ENCODE measurements at regions of chr11 and their contacts with region 1.

Region 1: GRCh38 chr11:86802601-86803051 is 2.3 kb downstream of the PRSS23 start:
- DNase-seq: no peak
- H3K4me3 Mint-ChIP-seq: peak overlapping the region; percentile 92
- H3K27ac Mint-ChIP-seq: peak overlapping the region; percentile 69
- H3K4me1 Mint-ChIP-seq: peaks cover 77% of the 10 kb centered on the region
- H3K27me3 Mint-ChIP-seq: peaks cover 24% of the 10 kb centered on the region

Region 2: DNA sequence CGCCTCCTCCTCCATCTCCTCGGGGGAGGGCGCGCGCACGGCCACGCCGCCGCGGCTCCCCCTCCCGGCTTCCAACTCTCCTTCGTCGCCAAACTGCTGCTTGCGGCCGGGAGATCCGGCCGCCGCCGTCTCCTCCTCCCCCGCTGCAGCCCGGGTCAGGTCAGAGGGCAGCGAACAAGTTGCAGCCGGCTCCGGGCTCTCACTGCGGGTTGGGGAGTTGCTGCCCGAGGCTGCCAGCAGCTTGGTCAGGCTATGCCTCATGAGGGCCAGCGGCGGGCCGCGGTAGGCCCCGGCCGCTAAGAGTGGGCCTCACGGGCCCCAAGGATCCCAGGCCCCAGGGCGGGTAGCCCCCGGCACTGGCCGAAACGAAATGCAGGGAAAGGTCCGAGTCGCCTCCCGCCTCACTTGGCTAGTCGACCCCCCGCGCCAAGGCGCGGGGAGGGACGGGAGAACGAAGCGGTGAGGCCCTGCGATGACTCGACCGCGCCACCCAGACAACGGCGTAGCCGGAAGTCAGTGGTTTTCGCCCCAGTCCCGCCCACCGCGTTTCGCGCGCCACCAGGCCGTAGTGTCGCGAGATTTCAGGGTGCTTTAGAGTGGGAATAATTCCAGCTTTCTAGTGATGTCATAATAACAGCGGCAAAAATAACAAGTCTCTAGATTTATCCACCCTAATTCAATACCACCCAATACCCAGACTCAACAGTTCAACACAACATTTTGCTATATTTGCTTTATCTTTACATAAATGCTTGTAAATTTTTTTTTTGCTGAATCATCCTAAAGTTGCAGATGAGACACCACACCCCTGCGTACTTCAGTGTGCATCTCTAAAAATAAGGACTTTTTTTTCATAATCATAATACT is 1137.8 kb before region 1 on chr11 and contains the start of gene CREBZF:
- intact Hi-C with region 1: loop called (anchors 5 kb)
- DNase-seq: peak; percentile 94
- H3K4me3 Mint-ChIP-seq: peak within 1 kb of the TSS; percentile 99
- H3K27ac Mint-ChIP-seq: peak within 1 kb of the TSS; percentile 97
- H3K4me1 Mint-ChIP-seq: peaks cover 51% of the 10 kb centered on the region
- H3K27me3 Mint-ChIP-seq: no peaks in the 10 kb centered on the region
- total RNA-seq, gene CREBZF: 52.0 and 55.9 TPM in 2 replicates

Region 3: GRCh38 chr11:85947431-85948272 is 855.0 kb before region 1 on chr11:
- intact Hi-C with region 1: loop called (anchors 1 kb)
- DNase-seq: peak; percentile 6
- H3K4me3 Mint-ChIP-seq: peak overlapping the region; percentile 7
- H3K27ac Mint-ChIP-seq: peak overlapping the region; percentile 93
- H3K4me1 Mint-ChIP-seq: peaks cover 60% of the 10 kb centered on the region
- H3K27me3 Mint-ChIP-seq: no peaks in the 10 kb centered on the region

Region 4: GRCh38 chr11:86447763-86448480 is 354.7 kb before region 1 on chr11:
- intact Hi-C with region 1: loop called (anchors 1 kb)
- DNase-seq: peak; percentile 31
- H3K4me3 Mint-ChIP-seq: peak overlapping the region; percentile 48
- H3K27ac Mint-ChIP-seq: no peak overlapping the region
- H3K4me1 Mint-ChIP-seq: peaks cover 43% of the 10 kb centered on the region
- H3K27me3 Mint-ChIP-seq: no peaks in the 10 kb centered on the region

Region 5: GRCh38 chr11:86592659-86593451 is 209.8 kb before region 1 on chr11:
- intact Hi-C with region 1: loop called (anchors 1 kb)
- DNase-seq: peak; percentile 81
- H3K4me3 Mint-ChIP-seq: peak overlapping the region; percentile 63
- H3K27ac Mint-ChIP-seq: peak overlapping the region; percentile 93
- H3K4me1 Mint-ChIP-seq: peaks cover 61% of the 10 kb centered on the region
- H3K27me3 Mint-ChIP-seq: no peaks in the 10 kb centered on the region

Region 6: GRCh38 chr11:86688398-86689179 is 114.0 kb before region 1 on chr11:
- intact Hi-C with region 1: loop called (anchors 1 kb)
- DNase-seq: peak; percentile 12
- H3K4me3 Mint-ChIP-seq: peak overlapping the region; percentile 60
- H3K27ac Mint-ChIP-seq: peak overlapping the region; percentile 92
- H3K4me1 Mint-ChIP-seq: peaks cover 26% of the 10 kb centered on the region
- H3K27me3 Mint-ChIP-seq: peaks cover 8% of the 10 kb centered on the region

Region 7: DNA sequence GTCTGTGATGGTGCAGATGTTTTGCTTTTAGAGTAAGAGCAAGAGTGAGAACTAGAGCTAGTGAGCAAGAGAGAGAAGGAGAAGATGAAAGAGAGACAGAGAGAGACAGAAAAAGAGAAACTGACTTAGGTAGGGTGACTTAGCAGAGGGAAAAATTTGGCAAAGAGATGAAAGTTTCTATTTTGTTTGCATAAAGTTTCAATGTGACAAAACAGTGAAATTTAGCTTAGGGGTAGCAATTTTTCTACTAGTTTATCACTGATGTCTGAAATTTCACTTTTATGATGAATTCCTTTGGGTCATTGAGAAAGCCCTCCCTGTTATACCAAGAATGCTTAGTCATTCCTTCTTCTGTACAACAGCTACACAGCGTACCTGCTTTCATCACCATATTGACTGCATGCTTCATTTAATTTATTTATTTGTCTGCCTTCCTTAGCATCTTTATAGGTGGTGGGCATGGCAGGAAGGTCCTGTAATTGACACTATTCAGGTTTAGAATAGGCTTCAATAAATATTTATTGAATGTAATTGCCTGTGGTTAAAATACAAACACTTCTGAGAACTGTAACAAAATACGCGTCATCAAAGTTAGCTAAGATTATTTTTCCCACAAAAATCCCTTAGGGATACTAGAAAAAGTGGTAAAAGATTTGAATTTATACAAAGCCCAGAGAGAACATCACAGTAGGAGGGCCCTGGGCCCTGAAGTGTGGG is 1554.9 kb after region 1 on chr11:
- intact Hi-C with region 1: loop called (anchors 10 kb)
- DNase-seq: no peak
- H3K4me3 Mint-ChIP-seq: peak overlapping the region; percentile 45
- H3K27ac Mint-ChIP-seq: peak overlapping the region; percentile 59
- H3K4me1 Mint-ChIP-seq: peaks cover 52% of the 10 kb centered on the region
- H3K27me3 Mint-ChIP-seq: no peaks in the 10 kb centered on the region